Activated CD8-positive, alpha-beta T cell treated with anti-CD3 and anti-CD28 coated beads for 36 hours (primary cell): ENCODE measurements at regions of chr13 and their contacts with region 1.

Region 1: GRCh38 chr13:100588331-100589177 is at the start of gene GGACT:
- DNase-seq: peak; percentile 85
- ATAC-seq: peak; percentile 93
- H3K4me3 Mint-ChIP-seq: peak within 1 kb of the TSS; percentile 77
- H3K27ac Mint-ChIP-seq: peak within 1 kb of the TSS; percentile 88
- H3K4me1 Mint-ChIP-seq: peaks cover 37% of the 10 kb centered on the region
- H3K27me3 Mint-ChIP-seq: no peaks in the 10 kb centered on the region
- CTCF ChIP-seq: peak; percentile 83
- total RNA-seq, gene GGACT: 4.0 to 5.3 TPM

Region 2: DNA sequence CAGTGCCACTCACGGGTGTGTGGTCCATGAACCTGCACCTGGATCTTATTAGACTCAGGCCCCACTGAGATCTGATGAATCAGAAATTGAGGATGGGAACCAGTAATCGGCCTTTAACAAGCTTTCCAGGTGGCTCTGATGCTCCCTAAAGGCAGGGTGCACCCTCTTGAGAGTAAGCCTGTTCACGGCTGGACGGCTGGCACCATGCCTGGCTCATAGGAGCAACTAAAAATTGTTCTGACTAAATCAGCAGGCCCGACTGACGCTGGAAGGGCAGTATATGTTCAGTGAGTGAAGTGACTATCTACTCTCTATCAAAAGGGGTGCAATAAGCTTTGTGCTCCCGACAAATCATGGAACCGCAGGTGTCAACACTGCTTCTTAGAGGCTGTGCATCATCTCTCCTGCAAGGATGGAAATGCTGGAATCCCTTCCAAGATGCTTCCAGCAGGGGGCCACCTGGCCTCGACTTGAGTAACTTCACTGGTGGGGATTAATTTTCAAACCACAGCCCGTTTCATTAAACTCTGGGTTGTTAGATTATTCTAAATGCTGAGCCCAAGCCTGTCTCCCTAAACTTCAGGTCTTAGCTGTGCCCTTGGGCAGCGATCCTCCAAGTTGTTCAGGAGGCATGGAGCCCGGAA is 57.6 kb after region 1 on chr13:
- CTCF ChIA-PET with region 1: no interaction called
- POLR2A ChIA-PET with region 1: no interaction called
- intact Hi-C with region 1: no loop called
- DNase-seq: peak; percentile 6
- ATAC-seq: no peak
- H3K4me3 Mint-ChIP-seq: no peak overlapping the region
- H3K27ac Mint-ChIP-seq: no peak overlapping the region
- H3K4me1 Mint-ChIP-seq: no peaks in the 10 kb centered on the region
- H3K27me3 Mint-ChIP-seq: no peaks in the 10 kb centered on the region
- CTCF ChIP-seq: no peak

Region 3: GRCh38 chr13:100674848-100675660 is 86.5 kb after region 1 on chr13:
- CTCF ChIA-PET with region 1: interaction called, 6 read pairs
- POLR2A ChIA-PET with region 1: interaction called, 4 read pairs
- intact Hi-C with region 1: loop called (anchors 5 kb)
- DNase-seq: peak; percentile 99
- ATAC-seq: peak; percentile 95
- H3K4me3 Mint-ChIP-seq: peak overlapping the region; percentile 82
- H3K27ac Mint-ChIP-seq: peak overlapping the region; percentile 82
- H3K4me1 Mint-ChIP-seq: peaks cover 25% of the 10 kb centered on the region
- H3K27me3 Mint-ChIP-seq: peaks cover 6% of the 10 kb centered on the region
- CTCF ChIP-seq: no peak

Region 4: DNA sequence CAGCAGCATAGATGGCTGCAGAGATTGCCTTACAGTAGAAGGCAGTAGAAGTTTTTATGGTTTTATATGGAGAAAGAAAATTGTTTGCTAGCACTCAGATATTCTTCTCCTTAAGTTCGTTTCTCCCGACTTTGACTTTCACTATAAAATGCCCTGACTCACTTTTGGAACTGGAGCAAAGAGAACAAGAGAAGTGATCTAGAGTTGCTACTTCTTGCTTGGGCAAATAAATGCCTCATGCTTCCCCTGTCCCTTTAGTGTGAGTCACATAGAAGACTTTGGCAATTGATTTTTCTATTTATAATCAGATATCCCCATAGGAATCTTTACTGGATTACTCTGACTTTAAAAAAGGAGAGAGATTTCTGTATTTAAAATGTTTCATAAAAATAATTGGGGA is 910.9 kb after region 1 on chr13:
- CTCF ChIA-PET with region 1: no interaction called
- POLR2A ChIA-PET with region 1: no interaction called
- intact Hi-C with region 1: no loop called
- DNase-seq: no peak
- ATAC-seq: no peak
- H3K4me3 Mint-ChIP-seq: no peak overlapping the region
- H3K27ac Mint-ChIP-seq: no peak overlapping the region
- H3K4me1 Mint-ChIP-seq: no peaks in the 10 kb centered on the region
- H3K27me3 Mint-ChIP-seq: peaks cover 17% of the 10 kb centered on the region
- CTCF ChIP-seq: no peak